Psoas muscle (tissue), 8 donors: ENCODE measurements at regions of chr15 and their contacts with region 1.

Region 1: DNA sequence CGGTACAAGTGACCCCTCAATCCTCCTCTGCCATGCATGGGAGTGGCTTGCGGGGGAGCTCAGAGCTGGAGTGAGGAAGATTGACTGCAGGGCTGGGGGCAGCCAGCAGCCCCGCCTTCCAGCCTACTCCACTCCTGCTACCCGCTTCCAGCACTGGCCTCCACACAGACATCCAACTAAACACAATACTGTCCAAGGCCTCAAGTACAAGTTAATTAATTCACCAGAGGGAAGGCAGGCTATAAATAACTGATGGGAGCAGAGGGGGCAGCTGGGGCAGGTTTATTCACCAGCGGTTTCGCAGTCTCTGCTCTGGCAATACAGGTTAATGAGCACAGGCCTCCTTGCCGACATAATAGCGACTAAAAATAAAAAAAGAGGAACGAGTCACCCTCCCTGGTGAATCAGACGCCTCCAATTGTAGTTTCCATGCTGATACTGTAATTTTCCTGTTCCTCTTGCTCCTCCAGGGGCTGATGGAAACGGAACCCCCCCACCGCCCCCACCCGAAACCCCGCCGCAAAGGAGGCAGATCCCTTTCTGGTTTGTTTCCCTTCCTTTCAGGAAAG is 166.4 kb upstream of the TLE3 start:
- DNase-seq: peak in 1 of 2 donors; percentile 42
- ATAC-seq: peak in 3 of 4 donors; percentile 12 to 46 (median 43)
- H3K4me3 ChIP-seq: no peak overlapping the region
- H3K27ac ChIP-seq: no peak overlapping the region
- H3K4me1 ChIP-seq: peaks cover 7% of the 10 kb centered on the region
- H3K27me3 ChIP-seq: peaks cover 0 to 1% (median 0%) of the 10 kb centered on the region in 3 donors
- CTCF ChIP-seq: no peak

Region 2: GRCh38 chr15:69576035-69576526 is 688.0 kb before region 1 on chr15:
- intact Hi-C with region 1: loop called in 1 of 2 experiments (anchors 10 kb)
- DNase-seq: peak; percentile 61 to 78
- ATAC-seq: peak; percentile 87 to 93 (median 92)
- H3K4me3 ChIP-seq: no peak overlapping the region
- H3K27ac ChIP-seq: no peak overlapping the region
- H3K4me1 ChIP-seq: no peaks in the 10 kb centered on the region
- H3K27me3 ChIP-seq: peaks cover 0 to 3% (median 0%) of the 10 kb centered on the region in 3 donors
- CTCF ChIP-seq: peak; percentile 75

Region 3: GRCh38 chr15:69885173-69885955 is 378.7 kb before region 1 on chr15:
- intact Hi-C with region 1: no loop called
- DNase-seq: no peak
- ATAC-seq: no peak
- H3K4me3 ChIP-seq: no peak overlapping the region
- H3K27ac ChIP-seq: no peak overlapping the region
- H3K4me1 ChIP-seq: no peaks in the 10 kb centered on the region
- H3K27me3 ChIP-seq: no peaks in the 10 kb centered on the region
- CTCF ChIP-seq: no peak

Region 4: DNA sequence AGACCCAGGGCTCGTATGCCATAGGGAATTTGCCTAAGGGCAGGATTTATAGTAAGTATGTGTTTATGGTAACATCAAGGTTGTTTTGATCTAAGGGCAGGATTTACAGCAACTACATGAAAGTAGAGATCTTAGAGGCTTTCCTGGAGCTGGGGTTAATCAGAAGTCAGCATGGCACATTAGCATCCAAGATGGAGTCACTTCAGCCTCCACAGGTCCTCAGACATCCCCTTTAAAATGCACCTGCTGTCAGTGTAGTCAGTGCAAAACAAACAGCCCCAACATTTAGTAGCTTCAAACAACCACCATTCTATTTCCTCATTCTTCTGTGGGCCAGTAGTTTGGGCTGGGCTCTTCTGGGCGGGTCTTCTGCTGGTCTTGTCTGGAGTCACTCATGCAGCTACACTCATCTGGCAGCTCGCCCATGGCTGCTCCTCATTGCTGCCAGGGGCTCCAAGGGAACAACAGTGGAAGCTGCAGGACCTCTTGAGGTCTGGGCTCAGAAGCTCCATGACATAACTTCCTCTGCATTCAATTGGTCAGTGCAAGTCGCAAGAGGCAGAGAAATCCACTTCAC is 266.3 kb before region 1 on chr15:
- intact Hi-C with region 1: no loop called
- DNase-seq: peak; percentile 33 to 67
- ATAC-seq: no peak
- H3K4me3 ChIP-seq: no peak overlapping the region
- H3K27ac ChIP-seq: no peak overlapping the region
- H3K4me1 ChIP-seq: no peaks in the 10 kb centered on the region
- H3K27me3 ChIP-seq: no peaks in the 10 kb centered on the region
- CTCF ChIP-seq: no peak

Region 5: DNA sequence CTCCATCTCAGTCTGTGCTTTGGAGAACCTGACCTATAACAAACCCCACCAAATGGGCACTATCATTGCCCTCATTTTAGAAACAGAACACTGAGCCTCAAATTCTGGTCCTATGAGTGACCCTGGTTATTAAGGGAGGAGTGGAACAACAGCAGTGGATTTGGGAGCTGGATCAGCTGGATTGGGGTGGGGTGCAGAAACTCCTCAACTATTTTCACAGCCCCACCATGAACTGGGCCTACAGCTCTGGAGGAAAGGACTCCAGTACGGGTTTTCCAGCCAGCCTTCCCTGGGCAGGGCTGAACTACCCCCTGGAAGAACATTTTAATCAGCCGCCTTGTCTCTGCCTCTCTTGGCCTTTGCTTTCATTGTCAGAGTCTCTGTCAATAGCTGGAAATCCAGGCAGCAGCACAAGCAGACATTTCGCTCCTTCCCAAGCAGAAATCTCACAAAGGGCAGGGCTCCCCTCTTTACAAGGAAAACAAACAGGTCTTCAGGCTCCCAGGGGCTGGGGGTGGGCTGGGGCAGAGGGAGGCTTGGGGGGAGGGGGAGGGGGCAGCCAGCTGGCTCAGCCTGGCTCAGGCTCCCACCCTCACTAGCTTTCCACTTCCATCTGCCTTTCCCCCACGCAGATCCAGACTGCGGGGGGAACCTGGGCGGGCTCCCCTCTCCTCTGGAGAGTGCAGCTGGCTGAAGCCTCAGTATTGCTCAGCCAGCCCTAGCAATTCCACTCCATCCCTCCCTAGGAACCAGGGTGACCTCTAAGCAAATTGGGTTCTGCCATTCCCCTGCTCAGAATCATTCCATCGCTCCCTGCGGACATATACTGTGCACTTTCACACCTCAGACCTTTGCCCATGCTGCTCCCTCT is 152.7 kb before region 1 on chr15:
- intact Hi-C with region 1: loop called in 1 of 2 experiments (anchors 10 kb)
- DNase-seq: peak; percentile 76 to 82
- ATAC-seq: peak; percentile 86 to 96 (median 90)
- H3K4me3 ChIP-seq: peak overlapping the region; percentile 28
- H3K27ac ChIP-seq: peak overlapping the region; percentile 59
- H3K4me1 ChIP-seq: peaks cover 7% of the 10 kb centered on the region
- H3K27me3 ChIP-seq: no peaks in the 10 kb centered on the region
- CTCF ChIP-seq: no peak